ENCODE measurements at regions of chr5 and their contacts with region 1.

Region 1: GRCh38 chr5:76256116-76256889 is 146.8 kb upstream of the IQGAP2 start:
- DNase-seq: peak; percentile 77
- H3K4me3 Mint-ChIP-seq: no peak overlapping the region
- H3K27ac Mint-ChIP-seq: no peak overlapping the region
- H3K4me1 Mint-ChIP-seq: peaks cover 39% of the 10 kb centered on the region
- H3K27me3 Mint-ChIP-seq: peaks cover 13% of the 10 kb centered on the region
- CTCF ChIP-seq: peak; percentile 66

Region 2: DNA sequence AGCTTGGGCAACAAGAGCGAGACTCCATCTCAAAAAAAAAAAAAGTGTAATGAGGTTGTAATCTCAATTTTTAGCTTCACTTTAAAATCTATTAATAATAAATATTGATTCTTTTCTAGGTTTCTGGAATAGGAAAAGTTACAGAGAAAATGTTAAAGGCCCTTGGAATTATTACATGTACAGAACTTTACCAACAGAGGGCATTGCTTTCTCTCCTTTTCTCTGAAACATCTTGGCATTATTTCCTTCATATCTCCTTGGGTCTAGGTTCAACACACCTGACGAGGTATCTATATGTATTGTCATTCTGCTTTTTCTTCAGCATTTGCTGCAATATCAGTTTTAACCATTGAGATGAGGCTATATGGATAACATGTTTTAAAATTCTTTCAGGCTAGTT is 671.7 kb before region 1 on chr5:
- CTCF ChIA-PET with region 1: no interaction called
- intact Hi-C with region 1: loop called (anchors 2 kb)
- DNase-seq: no peak
- H3K4me3 Mint-ChIP-seq: no peak overlapping the region
- H3K27ac Mint-ChIP-seq: no peak overlapping the region
- H3K4me1 Mint-ChIP-seq: no peaks in the 10 kb centered on the region
- H3K27me3 Mint-ChIP-seq: no peaks in the 10 kb centered on the region
- CTCF ChIP-seq: no peak

Region 3: GRCh38 chr5:75729321-75729720 is 527.0 kb before region 1 on chr5:
- CTCF ChIA-PET with region 1: no interaction called
- intact Hi-C with region 1: no loop called
- DNase-seq: peak; percentile 72
- H3K4me3 Mint-ChIP-seq: peak overlapping the region; percentile 7
- H3K27ac Mint-ChIP-seq: peak overlapping the region; percentile 35
- H3K4me1 Mint-ChIP-seq: peaks cover 30% of the 10 kb centered on the region
- H3K27me3 Mint-ChIP-seq: no peaks in the 10 kb centered on the region
- CTCF ChIP-seq: no peak

Region 4: DNA sequence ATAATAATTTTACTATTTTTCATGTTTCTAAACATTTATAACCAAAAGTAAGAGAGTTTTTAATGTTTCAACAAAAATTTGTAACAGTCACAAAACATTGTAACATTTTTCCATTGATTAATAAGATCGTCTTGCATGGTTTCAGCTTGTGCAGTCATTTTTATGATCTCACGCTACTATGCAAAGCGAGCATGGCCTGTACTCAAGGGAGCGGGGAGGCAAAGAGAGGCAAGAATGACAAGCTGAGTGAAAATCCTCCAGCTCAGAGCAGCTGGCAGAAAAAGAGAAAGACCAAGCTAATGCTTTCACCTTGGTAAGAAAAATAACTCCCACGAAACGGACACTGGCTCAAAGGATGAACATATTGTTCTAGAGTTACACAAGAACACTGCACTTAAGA is 263.1 kb before region 1 on chr5:
- CTCF ChIA-PET with region 1: no interaction called
- intact Hi-C with region 1: no loop called
- DNase-seq: no peak
- H3K4me3 Mint-ChIP-seq: no peak overlapping the region
- H3K27ac Mint-ChIP-seq: no peak overlapping the region
- H3K4me1 Mint-ChIP-seq: no peaks in the 10 kb centered on the region
- H3K27me3 Mint-ChIP-seq: peaks cover 68% of the 10 kb centered on the region
- CTCF ChIP-seq: no peak

Region 5: GRCh38 chr5:76016258-76016657 is 240.0 kb before region 1 on chr5:
- CTCF ChIA-PET with region 1: no interaction called
- intact Hi-C with region 1: loop called (anchors 10 kb)
- DNase-seq: peak; percentile 28
- H3K4me3 Mint-ChIP-seq: no peak overlapping the region
- H3K27ac Mint-ChIP-seq: no peak overlapping the region
- H3K4me1 Mint-ChIP-seq: no peaks in the 10 kb centered on the region
- H3K27me3 Mint-ChIP-seq: peaks cover 66% of the 10 kb centered on the region
- CTCF ChIP-seq: peak; percentile 35

Region 6: DNA sequence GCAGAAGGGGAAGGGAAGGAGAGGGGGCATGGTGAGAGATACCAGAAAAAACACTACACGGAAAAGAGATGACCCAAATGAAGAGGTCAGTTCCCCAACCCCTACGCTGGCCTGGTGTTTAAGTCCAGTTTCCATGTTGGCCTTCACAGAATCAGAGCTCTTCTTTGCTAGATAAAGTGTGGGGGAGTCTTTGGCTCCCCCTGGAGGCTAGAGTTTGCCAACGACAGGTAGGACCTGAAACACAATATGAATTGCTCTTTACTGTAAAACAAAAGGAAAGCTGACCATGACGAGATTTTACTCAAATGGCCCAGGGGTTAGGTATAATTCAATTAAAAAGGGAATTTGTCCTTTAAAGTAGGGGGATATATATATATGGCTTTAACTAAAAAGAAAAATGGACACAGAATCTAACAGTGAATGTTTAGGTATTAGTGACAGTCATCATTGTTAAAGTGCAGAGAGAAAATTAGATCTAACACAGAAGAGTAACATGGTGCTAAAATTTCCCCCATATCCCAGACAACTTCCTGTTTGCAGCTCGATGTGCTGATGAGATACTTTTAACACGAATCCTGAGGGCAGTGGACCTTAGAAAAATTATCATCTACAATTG is 81.1 kb before region 1 on chr5:
- CTCF ChIA-PET with region 1: interaction called, 11 read pairs
- intact Hi-C with region 1: loop called (anchors 5 kb)
- DNase-seq: peak; percentile 72
- H3K4me3 Mint-ChIP-seq: no peak overlapping the region
- H3K27ac Mint-ChIP-seq: no peak overlapping the region
- H3K4me1 Mint-ChIP-seq: no peaks in the 10 kb centered on the region
- H3K27me3 Mint-ChIP-seq: no peaks in the 10 kb centered on the region
- CTCF ChIP-seq: peak; percentile 71

Region 7: DNA sequence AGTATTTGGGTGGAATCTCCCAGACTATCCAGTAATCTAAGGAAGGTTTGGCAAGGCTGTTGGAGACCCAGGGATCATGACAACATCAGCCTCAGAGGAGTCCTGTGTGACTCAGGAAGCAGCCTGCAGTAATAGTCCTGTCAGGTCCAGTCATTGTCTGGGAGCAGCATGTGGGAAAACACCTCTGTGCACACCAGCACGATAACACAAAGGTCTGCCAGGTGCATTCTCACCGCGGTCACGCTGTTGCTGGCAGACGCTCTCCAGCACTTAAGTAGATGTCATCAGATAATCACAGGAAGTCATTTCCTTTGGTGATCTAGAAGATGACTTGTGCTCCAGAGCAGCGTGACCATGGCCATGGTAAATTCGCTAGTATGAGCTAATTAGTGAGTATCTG is 47.6 kb after region 1 on chr5:
- CTCF ChIA-PET with region 1: no interaction called
- intact Hi-C with region 1: loop called (anchors 2 kb)
- DNase-seq: no peak
- H3K4me3 Mint-ChIP-seq: no peak overlapping the region
- H3K27ac Mint-ChIP-seq: no peak overlapping the region
- H3K4me1 Mint-ChIP-seq: peaks cover 31% of the 10 kb centered on the region
- H3K27me3 Mint-ChIP-seq: no peaks in the 10 kb centered on the region
- CTCF ChIP-seq: no peak

Measured in Calu3 (cell line).